Left cardiac atrium (tissue), 4 donors: ENCODE measurements at regions of chr14 and their contacts with region 1.

Region 1: GRCh38 chr14:64823305-64823861 is 56.3 kb downstream of the SPTB start:
- DNase-seq: peak; percentile 82
- ATAC-seq: peak; percentile 87 to 92

Region 2: DNA sequence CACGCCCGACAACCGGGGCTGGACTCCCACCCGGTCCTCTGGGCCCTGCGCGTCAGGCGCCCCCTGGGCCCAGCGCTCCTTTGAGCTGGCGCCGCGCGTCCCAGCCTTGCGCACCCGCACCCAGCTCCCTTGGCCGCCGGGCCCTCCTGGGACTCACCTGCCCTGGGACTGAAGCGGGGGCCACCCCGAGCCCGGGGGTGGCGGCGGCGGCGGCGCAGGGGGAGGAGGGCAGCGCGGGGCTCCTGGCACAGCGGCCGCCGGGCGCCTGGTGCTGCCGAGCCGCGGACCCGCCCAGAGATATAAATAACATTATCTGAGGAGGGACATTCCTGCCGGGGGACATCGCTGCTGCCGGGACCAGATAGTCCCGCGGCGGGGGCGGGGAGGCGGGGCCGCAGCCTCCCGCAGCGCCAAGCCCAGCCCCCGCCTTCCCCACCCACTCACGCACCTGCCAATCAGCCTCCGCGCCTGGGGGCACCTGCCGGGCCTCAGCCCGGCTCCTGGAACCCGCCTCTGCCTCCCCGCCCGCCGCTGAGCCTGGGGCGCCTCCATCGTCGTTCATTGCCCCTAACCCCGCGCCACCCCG is 56.3 kb after region 1 on chr14 and contains the start of gene SPTB:
- intact Hi-C with region 1: loop called in 1 of 2 experiments (anchors 5 kb)
- DNase-seq: peak; percentile 74
- ATAC-seq: peak; percentile 91 to 95
- total RNA-seq, gene SPTB: 58.2 to 63.6 TPM

Region 3: GRCh38 chr14:64891839-64892375 is 68.5 kb after region 1 on chr14:
- intact Hi-C with region 1: loop called (anchors 5 kb)
- DNase-seq: no peak
- ATAC-seq: peak; percentile 78 to 79

Region 4: GRCh38 chr14:64986578-64987571 is 163.5 kb after region 1 on chr14 and contains the start of gene FNTB:
- intact Hi-C with region 1: loop called in 1 of 2 experiments (anchors 10 kb)
- DNase-seq: peak; percentile 97
- ATAC-seq: peak; percentile 98 to 99
- total RNA-seq, gene FNTB: 13.1 to 15.9 TPM